ENCODE measurements at regions of chr13 and their contacts with region 1.

Region 1: DNA sequence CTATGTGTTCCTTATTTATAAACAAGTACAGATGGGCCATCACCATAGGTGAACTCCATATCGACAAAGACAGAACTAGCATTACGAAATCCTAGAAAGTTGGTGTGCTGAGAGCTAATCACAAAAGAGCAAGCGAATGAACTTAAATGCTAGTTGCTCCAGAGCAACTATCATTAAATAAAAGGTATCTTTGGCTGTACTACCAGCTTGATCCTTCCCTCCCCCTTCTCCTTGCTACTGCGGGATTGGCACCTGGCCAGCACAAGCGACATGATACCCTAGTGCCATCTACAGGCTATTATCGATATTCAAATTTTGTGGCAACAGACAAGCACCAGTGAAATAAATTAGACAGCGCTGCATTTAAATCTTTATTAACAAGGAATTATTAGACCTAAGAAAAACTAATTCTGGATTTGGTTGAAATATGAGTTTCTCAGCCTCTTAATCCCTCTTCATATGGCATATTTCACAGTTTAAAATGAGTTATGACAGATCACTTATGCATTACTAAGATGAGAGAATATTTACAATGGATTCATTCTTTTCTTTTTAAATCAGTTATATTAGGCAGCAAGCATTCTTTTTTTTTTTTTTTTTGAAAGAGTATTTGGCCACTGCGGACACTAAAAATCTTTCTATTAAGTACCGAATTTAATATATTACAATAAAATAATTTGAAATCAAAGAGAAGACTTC is 5.8 kb downstream of the PCDH9 start:
- DNase-seq: peak; percentile 73
- H3K4me3 ChIP-seq: no peak overlapping the region
- H3K27ac ChIP-seq: no peak overlapping the region
- H3K4me1 ChIP-seq: no peaks in the 10 kb centered on the region
- H3K27me3 ChIP-seq: no peaks in the 10 kb centered on the region
- CTCF ChIP-seq: peak; percentile 32 to 82 (median 72)
- POLR2A ChIP-seq: no peak

Region 2: GRCh38 chr13:65656740-65657329 is 1567.5 kb before region 1 on chr13:
- intact Hi-C with region 1: loop called (anchors 10 kb)
- DNase-seq: no peak
- H3K4me3 ChIP-seq: no peak overlapping the region
- H3K27ac ChIP-seq: no peak overlapping the region
- H3K4me1 ChIP-seq: no peaks in the 10 kb centered on the region
- H3K27me3 ChIP-seq: no peaks in the 10 kb centered on the region
- CTCF ChIP-seq: peak in 3 of 4 experiments; percentile 28 to 53 (median 30)
- POLR2A ChIP-seq: no peak

Region 3: DNA sequence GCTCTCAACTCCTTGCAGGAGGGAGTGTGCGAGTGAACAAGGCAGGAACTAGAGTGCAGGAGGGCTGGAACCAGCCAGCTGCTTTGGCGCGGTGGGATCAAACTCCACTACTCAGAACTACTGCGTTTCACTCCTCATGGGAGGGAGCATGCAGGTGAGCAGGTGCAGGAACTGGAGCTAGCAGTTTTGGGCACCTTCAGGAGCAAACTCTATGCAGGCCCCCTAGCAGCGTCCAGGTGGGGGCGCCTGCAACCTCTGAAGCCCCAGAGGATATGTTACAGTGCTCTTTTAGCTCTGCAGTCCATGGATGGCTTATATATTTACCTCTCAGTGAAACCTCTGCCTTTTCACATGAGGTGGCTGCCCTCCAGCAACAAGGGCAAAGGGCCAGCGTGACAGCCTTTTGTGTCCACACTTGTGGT is 1297.5 kb before region 1 on chr13:
- intact Hi-C with region 1: loop called (anchors 10 kb)
- DNase-seq: peak; percentile 5
- H3K4me3 ChIP-seq: no peak overlapping the region
- H3K27ac ChIP-seq: no peak overlapping the region
- H3K4me1 ChIP-seq: no peaks in the 10 kb centered on the region
- H3K27me3 ChIP-seq: no peaks in the 10 kb centered on the region
- CTCF ChIP-seq: peak in 1 of 4 experiments; percentile 11
- POLR2A ChIP-seq: no peak

Region 4: GRCh38 chr13:66237411-66238062 is 986.8 kb before region 1 on chr13:
- intact Hi-C with region 1: no loop called
- DNase-seq: no peak
- H3K4me3 ChIP-seq: no peak overlapping the region
- H3K27ac ChIP-seq: no peak overlapping the region
- H3K4me1 ChIP-seq: no peaks in the 10 kb centered on the region
- H3K27me3 ChIP-seq: no peaks in the 10 kb centered on the region
- CTCF ChIP-seq: no peak
- POLR2A ChIP-seq: no peak

Measured in prostate gland (tissue), 2 donors.